GM12878 (cell line): ENCODE measurements at regions of chr2 and their contacts with region 1.

Region 1: DNA sequence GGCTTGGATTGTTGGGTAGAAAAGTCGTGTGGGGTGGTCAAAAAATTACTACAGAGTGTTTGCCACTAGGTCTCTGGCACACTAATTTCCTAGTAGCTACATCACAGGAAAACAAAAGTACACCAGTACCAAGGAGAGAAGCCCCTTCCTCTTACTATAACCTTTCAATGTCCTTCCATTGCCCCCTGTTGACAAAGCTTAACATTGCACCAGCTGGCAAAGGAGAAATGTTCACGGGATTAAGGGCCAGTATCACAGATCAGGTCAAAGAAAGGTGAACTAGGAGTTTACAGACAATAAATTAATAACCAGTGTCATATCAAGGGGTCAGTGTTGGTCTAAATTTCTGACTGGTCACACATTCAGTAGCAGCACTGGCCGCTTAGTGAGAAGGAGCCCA is 1139.6 kb upstream of the FAM98A start:
- DNase-seq: no peak
- ATAC-seq: peak; percentile 63
- H3K4me3 ChIP-seq: no peak overlapping the region
- H3K27ac ChIP-seq: no peak overlapping the region
- H3K4me1 ChIP-seq: no peaks in the 10 kb centered on the region
- H3K27me3 ChIP-seq: no peaks in the 10 kb centered on the region
- CTCF ChIP-seq: peak; percentile 31 to 66 (median 46); a peak in 4 of 6 replicates
- EP300 ChIP-seq: no peak
- POLR2A ChIP-seq: no peak
- RAD21 ChIP-seq: peak; percentile 29; the same call in 1 of the 2 replicates

Region 2: DNA sequence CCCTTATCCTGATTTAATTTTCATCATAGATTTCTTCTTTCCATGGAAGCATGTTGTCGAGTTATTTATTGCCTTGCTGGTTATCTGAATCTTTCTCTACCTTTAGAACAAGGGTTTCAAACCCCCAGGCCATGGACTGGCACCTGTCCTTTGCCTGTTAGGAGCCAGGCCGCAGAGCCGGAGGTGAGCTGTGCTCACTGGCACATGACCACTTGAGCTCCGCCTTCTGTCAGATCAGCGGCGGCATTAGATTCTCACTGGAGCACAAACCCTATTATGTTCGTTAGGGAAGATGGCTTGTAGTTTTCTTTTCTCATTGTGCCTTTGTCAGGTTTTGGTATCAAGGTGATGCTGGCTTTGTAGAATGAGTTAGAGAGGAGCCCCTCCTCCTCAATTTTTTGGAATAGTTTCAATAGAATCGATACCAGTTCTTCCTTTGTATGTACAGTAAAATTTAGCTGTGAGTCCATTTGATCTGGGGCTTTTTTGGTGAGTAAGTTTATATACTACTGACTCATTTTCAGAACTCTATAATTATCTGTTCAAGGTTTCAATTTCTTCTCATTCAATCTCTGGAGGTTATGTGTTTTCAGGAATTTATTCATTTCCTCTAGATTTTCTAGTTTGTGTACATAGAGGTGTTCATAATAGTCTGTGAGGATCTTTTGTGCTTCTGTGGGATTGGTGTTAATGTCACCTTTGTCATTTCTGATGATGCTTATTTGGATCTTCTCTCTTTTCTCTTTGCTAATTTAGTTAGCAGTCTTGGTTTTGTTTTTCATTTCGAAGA is 471.6 kb before region 1 on chr2:
- CTCF ChIA-PET with region 1: interaction called, 3 read pairs
- POLR2A ChIA-PET with region 1: no interaction called
- RAD21 ChIA-PET with region 1: no interaction called
- SMC1A ChIA-PET with region 1: no interaction called
- in situ Hi-C with region 1: no loop called
- intact Hi-C with region 1: loop called (anchors 10 kb)
- DNase-seq: peak; percentile 42
- ATAC-seq: peak; percentile 95
- H3K4me3 ChIP-seq: no peak overlapping the region
- H3K27ac ChIP-seq: no peak overlapping the region
- H3K4me1 ChIP-seq: no peaks in the 10 kb centered on the region; the same call in 1 of the 2 replicates
- H3K27me3 ChIP-seq: no peaks in the 10 kb centered on the region
- CTCF ChIP-seq: no peak
- EP300 ChIP-seq: peak; percentile 52 to 78
- POLR2A ChIP-seq: no peak
- RAD21 ChIP-seq: no peak

Region 3: GRCh38 chr2:34570266-34570872 is 168.3 kb before region 1 on chr2:
- CTCF ChIA-PET with region 1: interaction called, 38 read pairs
- POLR2A ChIA-PET with region 1: no interaction called
- RAD21 ChIA-PET with region 1: interaction called, 5 read pairs
- SMC1A ChIA-PET with region 1: interaction called, 30 read pairs
- in situ Hi-C with region 1: no loop called
- intact Hi-C with region 1: loop called (anchors 2 kb)
- DNase-seq: no peak
- ATAC-seq: peak; percentile 96
- H3K4me3 ChIP-seq: no peak overlapping the region
- H3K27ac ChIP-seq: no peak overlapping the region
- H3K4me1 ChIP-seq: no peaks in the 10 kb centered on the region
- H3K27me3 ChIP-seq: no peaks in the 10 kb centered on the region
- CTCF ChIP-seq: peak in 2 of 3 experiments; percentile 45 to 61; a peak in 3 of 6 replicates
- EP300 ChIP-seq: no peak
- POLR2A ChIP-seq: no peak
- RAD21 ChIP-seq: peak; percentile 35

Region 4: DNA sequence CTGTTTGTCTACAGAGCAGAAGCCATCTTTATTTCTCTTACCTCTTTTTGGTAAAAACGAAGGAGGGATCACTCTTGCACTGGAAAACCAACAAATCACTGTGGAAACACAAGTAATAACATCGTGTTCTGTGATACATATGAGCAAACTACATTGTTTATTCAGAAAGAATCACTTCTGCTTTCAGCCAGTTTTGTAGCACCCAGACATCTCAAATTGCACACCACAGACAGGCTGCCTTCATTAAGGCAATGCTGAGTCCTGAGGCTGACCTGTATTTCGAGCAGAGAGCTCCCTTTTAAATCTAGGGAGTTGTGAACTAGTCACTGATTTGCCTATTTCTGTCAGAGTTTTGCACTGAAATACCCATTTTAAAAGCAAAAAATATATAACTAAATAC is 136.4 kb before region 1 on chr2:
- CTCF ChIA-PET with region 1: no interaction called
- POLR2A ChIA-PET with region 1: no interaction called
- RAD21 ChIA-PET with region 1: no interaction called
- SMC1A ChIA-PET with region 1: interaction called, 3 read pairs
- in situ Hi-C with region 1: no loop called
- intact Hi-C with region 1: loop called (anchors 5 kb)
- DNase-seq: peak; percentile 12
- ATAC-seq: peak; percentile 94
- H3K4me3 ChIP-seq: no peak overlapping the region
- H3K27ac ChIP-seq: no peak overlapping the region
- H3K4me1 ChIP-seq: no peaks in the 10 kb centered on the region
- H3K27me3 ChIP-seq: no peaks in the 10 kb centered on the region
- CTCF ChIP-seq: no peak
- EP300 ChIP-seq: peak; percentile 50 to 71; a peak in 2 of 4 replicates
- POLR2A ChIP-seq: no peak
- RAD21 ChIP-seq: no peak